Dendritic cell treated with granulocyte-macrophage colony-stimulating factor and Interleukin-4, amounts not matched to agents 40 ng/mL and 50 ng/mL, for 4 days (primary cell): ENCODE measurements at regions of chr22 and their contacts with region 1.

Region 1: GRCh38 chr22:24423519-24424000 is 3.8 kb upstream of the ADORA2A start:
- H3K4me3 Mint-ChIP-seq: peak overlapping the region; percentile 63
- H3K27ac Mint-ChIP-seq: no peak overlapping the region
- H3K4me1 Mint-ChIP-seq: peaks cover 68% of the 10 kb centered on the region
- H3K27me3 Mint-ChIP-seq: peaks cover 41% of the 10 kb centered on the region

Region 2: DNA sequence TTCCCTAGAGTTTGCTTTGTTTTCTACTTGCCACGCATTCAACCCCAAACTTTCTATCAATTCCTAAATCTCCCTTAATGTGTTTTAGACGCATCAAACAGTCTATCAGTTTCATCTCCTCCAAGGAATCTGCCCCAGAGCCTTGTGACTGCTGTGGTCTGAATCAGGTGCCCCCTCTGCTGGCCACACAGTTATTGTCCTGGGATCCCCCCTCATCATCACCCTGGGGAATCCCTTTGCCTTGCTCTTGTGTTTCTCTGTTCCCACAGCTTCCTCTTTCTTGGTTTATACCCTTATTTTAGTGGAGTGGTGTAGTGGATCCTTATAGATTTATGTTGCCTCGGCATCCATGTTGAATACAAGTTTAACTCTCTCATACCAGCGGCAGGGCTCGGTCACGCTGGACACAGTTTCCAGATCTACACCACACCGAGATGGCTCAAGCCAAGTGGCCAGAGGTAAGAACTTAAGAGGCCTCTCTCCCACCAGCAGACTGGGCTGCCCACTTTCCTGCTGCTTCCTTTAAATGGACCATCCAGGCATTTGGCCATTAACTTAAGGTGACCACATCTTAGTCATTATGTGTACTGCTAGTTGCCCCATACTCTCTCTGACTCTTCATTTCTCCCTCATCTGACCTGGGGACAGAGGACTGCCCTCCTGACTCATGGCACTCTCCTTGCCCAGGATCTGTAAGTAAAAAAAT is 79.7 kb after region 1 on chr22:
- intact Hi-C with region 1: loop called (anchors 2 kb)
- H3K4me3 Mint-ChIP-seq: no peak overlapping the region
- H3K27ac Mint-ChIP-seq: peak overlapping the region; percentile 15
- H3K4me1 Mint-ChIP-seq: peaks cover 56% of the 10 kb centered on the region
- H3K27me3 Mint-ChIP-seq: peaks cover 11% of the 10 kb centered on the region

Region 3: GRCh38 chr22:24707470-24707801 is 283.9 kb after region 1 on chr22:
- intact Hi-C with region 1: no loop called
- H3K4me3 Mint-ChIP-seq: no peak overlapping the region
- H3K27ac Mint-ChIP-seq: no peak overlapping the region
- H3K4me1 Mint-ChIP-seq: no peaks in the 10 kb centered on the region
- H3K27me3 Mint-ChIP-seq: no peaks in the 10 kb centered on the region